BJ (cell line): ENCODE measurements at regions of chr3 and their contacts with region 1.

Region 1: DNA sequence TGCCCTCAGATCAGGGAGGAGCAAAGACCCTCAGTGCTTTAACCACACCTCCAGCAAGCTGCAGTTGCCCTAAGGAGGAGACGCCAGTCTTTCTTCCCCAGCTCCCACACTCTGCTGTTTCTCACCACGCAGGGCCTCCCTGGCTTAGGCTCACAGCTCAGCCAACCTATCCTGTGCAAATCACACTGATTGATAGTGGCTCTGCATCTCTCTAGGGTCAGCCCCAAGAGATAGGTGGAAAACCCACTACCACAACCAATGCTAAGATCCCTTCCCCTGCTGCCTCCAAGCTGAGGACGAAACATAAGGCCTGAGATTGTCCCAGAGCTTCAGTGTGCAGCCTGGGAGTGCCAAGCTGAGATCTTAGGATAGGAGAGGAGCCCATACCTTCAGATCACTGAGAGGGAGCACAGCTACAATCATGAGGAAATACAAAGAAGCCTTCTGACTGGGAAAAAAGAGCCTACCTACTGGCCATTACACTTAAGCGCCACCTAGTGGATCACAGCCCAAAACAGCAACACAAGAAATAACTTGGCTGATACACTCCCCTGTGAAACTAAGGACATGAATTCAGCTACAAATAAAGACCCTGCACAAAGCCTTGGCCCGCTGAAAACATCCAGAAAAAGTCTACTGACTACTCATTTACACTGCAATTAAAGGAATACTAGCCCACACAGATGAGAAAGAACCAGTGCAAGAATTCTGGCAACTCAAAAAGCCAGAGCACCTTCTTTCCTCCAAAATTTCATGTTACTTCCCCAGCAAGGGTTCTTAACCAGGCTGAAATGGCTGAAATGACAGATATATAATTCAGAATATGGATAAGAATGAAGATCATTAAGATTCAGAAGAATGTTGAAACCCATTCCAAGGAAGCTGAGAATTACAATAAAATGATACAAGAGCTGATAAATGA is 271.5 kb upstream of the DCBLD2 start:
- DNase-seq: no peak
- H3K4me3 ChIP-seq: no peak overlapping the region
- H3K27me3 ChIP-seq: no peaks in the 10 kb centered on the region
- CTCF ChIP-seq: peak; percentile 83

Region 2: DNA sequence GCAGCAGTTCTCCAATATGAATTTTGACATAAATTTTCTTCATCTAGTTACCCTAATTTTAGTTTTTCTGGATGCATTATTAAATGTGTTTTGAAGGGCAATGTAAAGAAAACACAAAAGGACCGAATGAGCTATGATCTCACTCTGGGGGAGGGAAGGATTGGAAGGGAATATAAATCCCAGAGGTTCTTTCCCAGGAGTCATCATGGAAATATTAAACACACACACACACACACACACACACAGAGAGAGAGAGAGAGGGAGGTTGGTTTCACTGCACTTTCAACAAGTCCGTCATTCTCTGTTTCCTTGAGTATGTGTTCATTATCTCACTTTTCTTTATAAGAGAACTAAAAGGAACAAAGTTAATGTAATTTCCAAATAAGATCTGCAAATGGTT is 200.8 kb before region 1 on chr3:
- CTCF ChIA-PET with region 1: no interaction called
- POLR2A ChIA-PET with region 1: no interaction called
- DNase-seq: no peak
- H3K4me3 ChIP-seq: no peak overlapping the region
- H3K27me3 ChIP-seq: no peaks in the 10 kb centered on the region
- CTCF ChIP-seq: no peak

Region 3: GRCh38 chr3:99023590-99024192 is 149.3 kb before region 1 on chr3:
- CTCF ChIA-PET with region 1: interaction called, 30 read pairs
- POLR2A ChIA-PET with region 1: no interaction called
- DNase-seq: peak; percentile 4
- H3K4me3 ChIP-seq: no peak overlapping the region
- H3K27me3 ChIP-seq: no peaks in the 10 kb centered on the region
- CTCF ChIP-seq: peak; percentile 58

Region 4: DNA sequence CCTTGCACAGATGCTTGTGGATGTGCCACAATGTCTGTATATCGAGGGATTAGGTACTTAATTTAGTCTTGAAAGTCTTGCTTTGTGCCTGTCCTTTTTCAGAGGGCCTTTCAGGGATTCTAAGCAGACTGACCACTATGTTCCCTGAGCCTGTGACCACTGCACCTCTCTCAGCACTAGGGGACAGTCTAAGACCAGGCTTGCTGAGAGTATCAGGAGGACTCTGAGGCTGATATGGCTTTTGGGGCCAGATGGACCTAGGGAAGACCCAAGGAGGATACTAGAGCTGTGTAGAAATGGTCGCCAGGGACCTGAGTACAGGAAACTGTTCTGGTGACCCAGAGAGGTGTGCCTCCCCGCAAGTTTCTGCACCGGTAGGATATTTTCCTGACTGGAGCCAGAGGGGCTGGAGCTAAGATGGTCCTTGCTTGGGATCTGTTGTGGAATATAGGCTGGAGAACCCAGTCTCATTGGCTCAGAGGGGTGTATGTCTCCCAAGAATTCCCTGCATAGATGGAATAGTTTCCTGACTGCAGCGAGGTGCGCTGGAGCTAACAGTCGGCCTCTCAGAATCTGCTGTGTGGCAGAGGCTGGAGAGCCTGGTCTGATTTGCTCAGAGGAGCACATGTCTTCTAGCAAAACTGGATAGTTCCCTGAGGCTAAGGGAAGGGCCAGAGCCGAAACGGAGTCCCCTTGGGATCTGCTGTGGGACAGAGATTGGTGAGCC is 58.3 kb before region 1 on chr3:
- CTCF ChIA-PET with region 1: interaction called, 23 read pairs
- POLR2A ChIA-PET with region 1: no interaction called
- DNase-seq: no peak
- H3K4me3 ChIP-seq: no peak overlapping the region
- H3K27me3 ChIP-seq: no peaks in the 10 kb centered on the region
- CTCF ChIP-seq: peak; percentile 89

Region 5: DNA sequence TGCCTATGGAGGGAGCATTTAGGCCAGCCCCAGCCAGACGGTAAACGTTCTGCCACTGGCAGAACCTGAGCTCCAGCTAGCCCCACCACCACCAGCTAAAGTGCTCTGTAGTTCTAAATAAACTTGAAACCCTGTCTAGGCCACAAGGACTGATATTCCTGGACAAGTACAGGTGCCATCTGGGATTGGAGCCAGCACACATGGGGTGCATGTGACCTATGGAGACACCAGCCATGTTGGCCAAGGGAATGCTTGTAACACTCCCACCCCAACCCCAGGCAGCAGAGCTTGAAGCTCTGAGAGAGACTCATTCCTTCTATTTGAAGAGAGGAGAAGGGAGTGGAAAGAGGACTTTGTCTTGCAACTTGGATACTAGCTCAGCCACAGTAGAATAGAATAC is 13.0 kb after region 1 on chr3:
- CTCF ChIA-PET with region 1: interaction called, 17 read pairs
- POLR2A ChIA-PET with region 1: no interaction called
- DNase-seq: no peak
- H3K4me3 ChIP-seq: no peak overlapping the region
- H3K27me3 ChIP-seq: no peaks in the 10 kb centered on the region
- CTCF ChIP-seq: no peak